PC-3 (cell line): ENCODE measurements at regions of chr15 and their contacts with region 1.

Region 1: GRCh38 chr15:32651229-32651837 is 9.8 kb downstream of the SCG5 start:
- DNase-seq: peak; percentile 88
- ATAC-seq: peak; percentile 78
- H3K4me3 ChIP-seq: no peak overlapping the region
- H3K27ac ChIP-seq: peak overlapping the region; percentile 69
- H3K4me1 ChIP-seq: peaks cover 23% of the 10 kb centered on the region
- H3K27me3 ChIP-seq: no peaks in the 10 kb centered on the region
- CTCF ChIP-seq: peak; percentile 96

Region 2: GRCh38 chr15:32936283-32936918 is 285.1 kb after region 1 on chr15:
- CTCF ChIA-PET with region 1: interaction called, 10 read pairs
- POLR2A ChIA-PET with region 1: no interaction called
- intact Hi-C with region 1: no loop called
- DNase-seq: peak; percentile 65
- ATAC-seq: peak; percentile 46; the same call in 1 of the 2 replicates
- H3K4me3 ChIP-seq: no peak overlapping the region
- H3K27ac ChIP-seq: no peak overlapping the region
- H3K4me1 ChIP-seq: no peaks in the 10 kb centered on the region
- H3K27me3 ChIP-seq: no peaks in the 10 kb centered on the region
- CTCF ChIP-seq: peak; percentile 80

Region 3: GRCh38 chr15:32956006-32956405 is 304.7 kb after region 1 on chr15:
- CTCF ChIA-PET with region 1: interaction called, 9 read pairs
- POLR2A ChIA-PET with region 1: no interaction called
- intact Hi-C with region 1: loop called (anchors 1 kb)
- DNase-seq: peak; percentile 75
- ATAC-seq: peak; percentile 86
- H3K4me3 ChIP-seq: no peak overlapping the region
- H3K27ac ChIP-seq: 0 out of 2 replicates have a peak overlapping the region, but pooled peaks have one; percentile 1
- H3K4me1 ChIP-seq: peaks cover 17% of the 10 kb centered on the region
- H3K27me3 ChIP-seq: no peaks in the 10 kb centered on the region
- CTCF ChIP-seq: peak; percentile 89

Region 4: GRCh38 chr15:33132722-33133345 is 481.5 kb after region 1 on chr15:
- CTCF ChIA-PET with region 1: no interaction called
- POLR2A ChIA-PET with region 1: no interaction called
- intact Hi-C with region 1: loop called (anchors 1 kb)
- DNase-seq: peak; percentile 85
- ATAC-seq: peak; percentile 96
- H3K4me3 ChIP-seq: no peak overlapping the region
- H3K27ac ChIP-seq: no peak overlapping the region
- H3K4me1 ChIP-seq: peaks cover 16% of the 10 kb centered on the region
- H3K27me3 ChIP-seq: no peaks in the 10 kb centered on the region
- CTCF ChIP-seq: peak; percentile 91